ENCODE measurements at regions of chr7 and their contacts with region 1.

Region 1: GRCh38 chr7:130069978-130070860 is at the start of gene KLHDC10:
- DNase-seq: peak; percentile 96 to 99 (median 97)
- H3K4me3 ChIP-seq: peak within 1 kb of the TSS; percentile 84
- H3K27ac ChIP-seq: peak within 1 kb of the TSS in 1 of 2 donors; percentile 73
- H3K4me1 ChIP-seq: peaks cover 4% of the 10 kb centered on the region
- H3K27me3 ChIP-seq: no peaks in the 10 kb centered on the region
- CTCF ChIP-seq: peak in 1 of 3 donors; percentile 8
- EP300 ChIP-seq: no peak
- POLR2A ChIP-seq: no peak
- total RNA-seq, gene KLHDC10: 11.3 to 36.4 (median 28.5) TPM

Region 2: GRCh38 chr7:130490888-130491804 is 420.9 kb after region 1 on chr7:
- intact Hi-C with region 1: loop called in 1 of 4 experiments (anchors 5 kb)
- DNase-seq: peak; percentile 41 to 80 (median 72)
- H3K4me3 ChIP-seq: peak overlapping the region; percentile 38
- H3K27ac ChIP-seq: peak overlapping the region; percentile 27 to 28
- H3K4me1 ChIP-seq: peaks cover 4% of the 10 kb centered on the region
- H3K27me3 ChIP-seq: no peaks in the 10 kb centered on the region
- CTCF ChIP-seq: peak; percentile 43 to 63 (median 57)
- EP300 ChIP-seq: no peak
- POLR2A ChIP-seq: no peak

Region 3: GRCh38 chr7:130721486-130722280 is 651.5 kb after region 1 on chr7:
- intact Hi-C with region 1: loop called in 1 of 4 experiments (anchors 5 kb)
- DNase-seq: peak; percentile 60 to 79 (median 78)
- H3K4me3 ChIP-seq: no peak overlapping the region
- H3K27ac ChIP-seq: no peak overlapping the region
- H3K4me1 ChIP-seq: peaks cover 2% of the 10 kb centered on the region
- H3K27me3 ChIP-seq: no peaks in the 10 kb centered on the region
- CTCF ChIP-seq: peak; percentile 44 to 58 (median 50)
- EP300 ChIP-seq: no peak
- POLR2A ChIP-seq: no peak

Region 4: DNA sequence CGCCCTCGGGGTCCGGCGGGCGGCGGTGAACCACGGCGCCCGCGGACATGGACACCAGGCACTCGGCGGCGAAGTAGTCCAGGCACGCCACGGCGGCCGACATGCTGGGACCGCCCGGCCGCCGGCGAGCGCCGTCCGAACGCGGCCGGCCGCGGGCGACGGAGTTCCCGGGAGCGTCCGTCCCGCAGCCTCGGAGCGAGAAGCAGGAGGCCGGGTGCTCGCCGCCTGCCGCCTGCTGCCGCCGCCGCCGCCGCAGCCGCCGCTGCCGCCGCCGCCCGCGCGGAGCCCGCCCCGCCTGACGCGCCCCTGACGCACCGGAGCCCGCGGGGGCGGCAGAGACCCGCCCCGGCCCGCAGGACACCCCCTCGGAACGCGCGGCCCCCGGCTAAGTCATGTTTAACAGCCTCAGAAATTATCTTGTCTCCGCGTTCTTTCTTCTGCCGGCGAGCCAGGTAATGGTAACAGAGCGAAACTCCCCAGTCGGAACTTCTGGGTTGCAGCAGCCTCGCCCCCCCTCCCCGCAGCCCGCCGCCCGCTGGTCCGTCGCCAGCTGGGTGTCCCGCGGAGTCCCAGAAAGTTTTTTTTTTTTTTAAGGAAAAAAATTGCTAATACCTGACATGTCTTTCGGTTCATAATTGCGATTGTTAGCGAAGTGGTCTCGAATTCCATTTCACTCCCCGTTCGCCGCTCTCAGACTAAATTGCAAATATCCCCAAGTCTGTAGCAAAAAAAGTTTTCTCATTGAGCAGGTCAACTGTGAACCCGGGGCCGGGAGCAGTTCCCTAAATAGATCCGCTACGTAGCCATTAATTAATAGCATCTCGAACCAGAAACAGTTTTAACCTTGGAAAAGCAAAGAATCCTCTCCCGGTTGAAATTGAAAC is 664.0 kb after region 1 on chr7 and contains the start of gene KLF14:
- intact Hi-C with region 1: loop called in 1 of 4 experiments (anchors 10 kb)
- DNase-seq: peak; percentile 25 to 54 (median 32)
- H3K4me3 ChIP-seq: peak within 1 kb of the TSS; percentile 39
- H3K27ac ChIP-seq: peak within 1 kb of the TSS in 1 of 2 donors; percentile 13
- H3K4me1 ChIP-seq: no peaks in the 10 kb centered on the region
- H3K27me3 ChIP-seq: no peaks in the 10 kb centered on the region
- CTCF ChIP-seq: no peak
- EP300 ChIP-seq: no peak
- POLR2A ChIP-seq: no peak
- total RNA-seq, gene KLF14: 0.10 to 0.84 (median 0.30) TPM in 5 of 7 donors, not detected in the others